ENCODE measurements at regions of chr3 and their contacts with region 1.

Region 1: GRCh38 chr3:174620138-174620537 is 239.0 kb upstream of the NAALADL2 start:
- DNase-seq: no peak
- H3K4me3 ChIP-seq: no peak overlapping the region
- H3K4me3 Mint-ChIP-seq: no peak overlapping the region
- H3K27ac Mint-ChIP-seq: no peak overlapping the region
- H3K4me1 ChIP-seq: no peaks in the 10 kb centered on the region; the same call in 1 of the 2 replicates
- H3K4me1 Mint-ChIP-seq: no peaks in the 10 kb centered on the region
- H3K27me3 ChIP-seq: no peaks in the 10 kb centered on the region
- H3K27me3 Mint-ChIP-seq: no peaks in the 10 kb centered on the region
- CTCF ChIP-seq: no peak

Region 2: DNA sequence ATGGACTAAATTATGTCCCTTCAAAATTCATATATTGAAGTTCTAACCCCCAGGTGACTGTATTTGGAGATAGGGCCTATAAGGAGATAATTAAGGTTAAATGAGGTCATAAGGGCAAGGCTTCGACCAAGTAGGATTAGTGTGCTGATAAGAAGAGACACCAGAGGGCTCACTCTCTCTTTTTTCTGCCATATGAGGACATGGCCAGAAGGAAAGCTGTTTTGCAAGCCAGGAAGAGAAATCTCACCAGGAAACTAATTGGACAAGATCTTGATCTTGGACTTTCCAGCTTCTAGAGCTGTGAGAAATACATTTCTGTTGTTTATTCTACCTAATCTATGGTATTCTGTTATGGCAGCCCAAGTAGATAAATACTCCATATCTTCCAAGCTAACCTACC is 264.6 kb before region 1 on chr3:
- CTCF ChIA-PET with region 1: no interaction called
- POLR2A ChIA-PET with region 1: no interaction called
- intact Hi-C with region 1: loop called (anchors 1 kb)
- DNase-seq: peak in 1 of 2 experiments; percentile 34
- H3K4me3 ChIP-seq: no peak overlapping the region
- H3K4me3 Mint-ChIP-seq: no peak overlapping the region
- H3K27ac Mint-ChIP-seq: no peak overlapping the region
- H3K4me1 ChIP-seq: no peaks in the 10 kb centered on the region
- H3K4me1 Mint-ChIP-seq: no peaks in the 10 kb centered on the region
- H3K27me3 ChIP-seq: no peaks in the 10 kb centered on the region
- H3K27me3 Mint-ChIP-seq: no peaks in the 10 kb centered on the region
- CTCF ChIP-seq: peak; percentile 16 to 47

Measured in Caco-2 (cell line).